ENCODE measurements at regions of chr2 and their contacts with region 1.

Region 1: DNA sequence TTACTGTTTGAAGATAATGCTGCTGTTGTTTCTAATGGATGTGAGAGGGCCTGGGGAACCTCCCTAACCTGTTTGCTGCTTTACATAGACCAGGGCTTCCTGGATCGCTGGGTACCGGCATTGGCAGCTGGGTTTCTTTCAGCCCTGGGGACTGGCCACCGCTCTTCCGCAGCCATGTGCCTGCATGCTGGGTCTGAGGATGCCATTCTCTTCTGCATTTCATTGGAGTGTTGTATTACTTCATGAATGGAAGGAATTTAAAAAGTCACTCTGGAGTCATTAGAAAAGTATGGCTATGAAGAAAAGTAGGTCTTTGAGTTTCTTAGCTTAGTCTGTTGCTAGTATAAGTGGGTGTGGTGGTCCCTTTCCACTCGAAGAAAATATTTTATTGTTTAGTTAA is 107.3 kb upstream of the MGAT5 start:
- DNase-seq: no peak
- ATAC-seq: peak; percentile 49
- H3K4me3 Mint-ChIP-seq: no peak overlapping the region
- H3K27ac Mint-ChIP-seq: peak overlapping the region; percentile 74
- H3K4me1 Mint-ChIP-seq: peaks cover 91% of the 10 kb centered on the region
- H3K27me3 Mint-ChIP-seq: no peaks in the 10 kb centered on the region
- CTCF ChIP-seq: no peak

Region 2: DNA sequence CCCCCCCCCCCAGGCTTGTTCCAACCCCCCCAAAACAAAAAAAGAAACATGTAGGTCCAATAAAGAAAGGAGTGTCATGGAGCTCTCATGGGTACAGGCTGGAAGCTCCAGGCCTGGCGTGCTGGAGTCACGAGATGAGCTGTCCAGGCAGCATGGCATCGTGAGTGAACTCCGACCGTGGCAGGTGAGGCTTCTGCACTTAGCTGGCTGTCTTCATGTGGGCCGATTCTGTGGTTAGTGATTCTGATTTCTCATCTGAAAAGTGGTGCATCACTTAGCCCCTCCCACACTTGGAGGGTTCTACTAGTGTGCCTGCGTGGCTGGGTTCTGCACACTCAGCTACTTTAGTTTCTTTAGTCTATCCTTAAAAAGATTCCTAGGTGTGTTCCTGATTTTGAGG is 19.1 kb before region 1 on chr2:
- CTCF ChIA-PET with region 1: interaction called, 4 read pairs
- POLR2A ChIA-PET with region 1: interaction called, 4 read pairs
- intact Hi-C with region 1: loop called (anchors 1 kb)
- DNase-seq: no peak
- ATAC-seq: peak; percentile 59
- H3K4me3 Mint-ChIP-seq: peak overlapping the region; percentile 56
- H3K27ac Mint-ChIP-seq: peak overlapping the region; percentile 65
- H3K4me1 Mint-ChIP-seq: peaks cover 88% of the 10 kb centered on the region
- H3K27me3 Mint-ChIP-seq: no peaks in the 10 kb centered on the region
- CTCF ChIP-seq: no peak

Region 3: GRCh38 chr2:134198006-134198634 is 51.5 kb after region 1 on chr2:
- CTCF ChIA-PET with region 1: no interaction called
- POLR2A ChIA-PET with region 1: interaction called, 13 read pairs
- intact Hi-C with region 1: no loop called
- DNase-seq: no peak
- ATAC-seq: peak; percentile 25
- H3K4me3 Mint-ChIP-seq: peak overlapping the region; percentile 53
- H3K27ac Mint-ChIP-seq: peak overlapping the region; percentile 60
- H3K4me1 Mint-ChIP-seq: peaks cover 87% of the 10 kb centered on the region
- H3K27me3 Mint-ChIP-seq: no peaks in the 10 kb centered on the region
- CTCF ChIP-seq: no peak

Measured in activated B cell treated with CpG ODN at 0.5 μM for 24 hours (primary cell).